Left cardiac atrium (tissue), 4 donors: ENCODE measurements at regions of chr7 and their contacts with region 1.

Region 1: GRCh38 chr7:117119192-117119924 is 166.1 kb downstream of the ST7 start:
- DNase-seq: peak; percentile 78
- ATAC-seq: peak in 1 of 2 donors; percentile 53

Region 2: DNA sequence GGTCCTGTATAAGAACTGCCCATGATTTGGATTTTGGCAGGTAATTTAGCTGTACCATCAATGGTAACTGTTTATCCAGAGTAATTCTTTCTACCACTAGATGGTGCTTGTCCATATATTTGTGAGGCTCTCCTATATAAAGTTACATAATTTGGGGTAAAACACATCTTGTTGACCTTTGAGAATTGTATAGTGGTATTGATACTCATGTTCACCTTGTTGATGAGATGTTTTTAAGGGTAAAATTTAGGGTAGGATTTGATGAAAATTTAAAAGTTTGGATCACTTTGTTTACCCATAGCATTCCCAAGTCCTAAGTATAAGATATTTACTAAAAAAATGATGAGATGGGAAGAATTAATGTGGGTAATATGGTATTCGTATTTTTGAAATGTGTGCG is 134.4 kb before region 1 on chr7:
- intact Hi-C with region 1: loop called (anchors 2 to 5 kb)
- DNase-seq: no peak
- ATAC-seq: peak in 1 of 2 donors; percentile 62

Region 3: DNA sequence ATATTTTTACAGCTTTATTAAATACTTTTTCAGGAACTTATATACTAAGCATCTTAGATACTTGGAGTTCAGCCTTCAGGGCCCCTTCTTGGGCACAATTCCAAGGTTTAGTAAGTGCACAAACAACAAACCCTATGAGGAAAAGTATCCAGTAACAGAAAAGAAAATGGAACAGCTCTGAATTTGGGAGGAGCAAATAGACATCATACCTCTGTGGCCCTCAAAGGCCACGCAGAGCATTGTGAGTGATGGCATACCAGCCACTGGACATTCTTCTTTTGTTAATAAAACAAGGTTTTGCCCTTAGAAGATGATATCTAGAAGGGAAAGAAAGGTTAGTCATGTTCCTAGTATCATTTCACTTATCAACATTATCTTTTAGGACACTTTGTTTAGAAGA is 120.0 kb before region 1 on chr7:
- intact Hi-C with region 1: no loop called
- DNase-seq: no peak
- ATAC-seq: no peak

Region 4: GRCh38 chr7:117247809-117248208 is 128.5 kb after region 1 on chr7:
- intact Hi-C with region 1: no loop called
- DNase-seq: no peak
- ATAC-seq: no peak

Region 5: GRCh38 chr7:117269417-117269816 is 150.1 kb after region 1 on chr7:
- intact Hi-C with region 1: no loop called
- DNase-seq: no peak
- ATAC-seq: peak in 1 of 2 donors; percentile 91